Psoas muscle (tissue), 8 donors: ENCODE measurements at regions of chr17 and their contacts with region 1.

Region 1: GRCh38 chr17:82003411-82004381 is 19.0 kb downstream of the CENPX start:
- DNase-seq: peak; percentile 88 to 89
- ATAC-seq: peak; percentile 72 to 85 (median 78)
- H3K4me3 ChIP-seq: no peak overlapping the region
- H3K27ac ChIP-seq: peak overlapping the region; percentile 58
- H3K4me1 ChIP-seq: peaks cover 61% of the 10 kb centered on the region
- H3K27me3 ChIP-seq: no peaks in the 10 kb centered on the region
- CTCF ChIP-seq: no peak

Region 2: GRCh38 chr17:81959362-81960129 is 44.1 kb before region 1 on chr17:
- intact Hi-C with region 1: loop called in 1 of 2 experiments (anchors 5 kb)
- DNase-seq: peak; percentile 75 to 88
- ATAC-seq: peak; percentile 82 to 87 (median 84)
- H3K4me3 ChIP-seq: peak overlapping the region; percentile 66
- H3K27ac ChIP-seq: no peak overlapping the region
- H3K4me1 ChIP-seq: peaks cover 27% of the 10 kb centered on the region
- H3K27me3 ChIP-seq: peaks cover 0 to 23% (median 3%) of the 10 kb centered on the region in 3 donors
- CTCF ChIP-seq: peak; percentile 90

Region 3: DNA sequence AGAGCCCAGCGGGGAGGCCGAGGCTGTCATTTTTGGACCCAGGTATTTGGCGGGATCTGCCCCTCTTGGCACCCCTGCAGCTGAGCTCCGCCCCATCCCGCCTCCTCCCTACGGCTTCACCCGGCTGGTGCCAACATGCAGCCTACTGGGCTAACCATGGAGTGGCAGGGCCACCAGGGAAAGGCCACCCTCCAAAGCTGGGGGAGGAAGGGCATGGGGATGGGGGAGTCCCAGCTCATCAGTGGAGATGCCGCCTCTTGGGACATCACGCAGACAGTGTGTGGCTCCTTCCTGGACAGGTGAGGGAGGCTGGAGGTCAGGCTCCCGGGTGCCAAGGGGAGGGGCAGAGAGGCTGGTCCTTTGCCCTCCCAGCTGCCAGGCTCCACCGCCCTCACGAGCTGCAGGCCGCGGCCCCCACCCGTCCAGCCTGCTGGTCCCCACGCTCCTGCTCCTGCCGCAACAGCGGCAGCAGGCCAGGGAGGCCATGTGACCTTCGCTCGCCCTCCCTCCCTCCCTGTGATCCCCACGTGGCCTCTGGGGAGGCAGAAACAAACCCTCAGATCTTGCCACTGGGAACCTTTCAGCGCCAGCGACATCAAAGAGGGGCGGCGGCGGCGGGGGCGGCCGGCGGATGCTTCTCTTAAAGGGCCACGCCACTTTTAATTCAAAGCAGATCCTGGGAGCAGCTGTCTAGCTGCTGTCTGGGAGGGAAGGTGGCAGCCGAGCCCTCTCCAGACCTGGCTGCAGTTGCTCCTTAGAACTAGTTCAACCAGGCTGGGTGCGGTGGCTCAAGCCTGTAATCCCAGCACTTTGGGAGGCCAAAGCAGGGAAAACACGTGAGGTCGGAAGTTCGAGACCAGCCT is 35.9 kb before region 1 on chr17:
- intact Hi-C with region 1: loop called (anchors 5 kb)
- DNase-seq: peak; percentile 85 to 90
- ATAC-seq: peak; percentile 77 to 91 (median 87)
- H3K4me3 ChIP-seq: peak overlapping the region; percentile 38
- H3K27ac ChIP-seq: peak overlapping the region; percentile 61
- H3K4me1 ChIP-seq: peaks cover 22% of the 10 kb centered on the region
- H3K27me3 ChIP-seq: no peaks in the 10 kb centered on the region
- CTCF ChIP-seq: no peak

Region 4: GRCh38 chr17:82292251-82293154 is 288.8 kb after region 1 on chr17:
- intact Hi-C with region 1: no loop called
- DNase-seq: peak; percentile 97 to 98
- ATAC-seq: peak; percentile 82 to 94 (median 84)
- H3K4me3 ChIP-seq: peak overlapping the region; percentile 92
- H3K27ac ChIP-seq: peak overlapping the region; percentile 99
- H3K4me1 ChIP-seq: peaks cover 40% of the 10 kb centered on the region
- H3K27me3 ChIP-seq: no peaks in the 10 kb centered on the region
- CTCF ChIP-seq: no peak